Prostate gland (tissue), 2 donors: ENCODE measurements at regions of chr5 and their contacts with region 1.

Region 1: GRCh38 chr5:71782771-71783770 is 64.0 kb downstream of the CARTPT start:
- DNase-seq: peak; percentile 75
- H3K4me3 ChIP-seq: peak overlapping the region in 1 of 2 donors; percentile 13
- H3K27ac ChIP-seq: peak overlapping the region; percentile 32 to 34
- H3K4me1 ChIP-seq: no peaks in the 10 kb centered on the region
- H3K27me3 ChIP-seq: no peaks in the 10 kb centered on the region
- CTCF ChIP-seq: peak; percentile 51 to 85 (median 82)
- POLR2A ChIP-seq: no peak

Region 2: DNA sequence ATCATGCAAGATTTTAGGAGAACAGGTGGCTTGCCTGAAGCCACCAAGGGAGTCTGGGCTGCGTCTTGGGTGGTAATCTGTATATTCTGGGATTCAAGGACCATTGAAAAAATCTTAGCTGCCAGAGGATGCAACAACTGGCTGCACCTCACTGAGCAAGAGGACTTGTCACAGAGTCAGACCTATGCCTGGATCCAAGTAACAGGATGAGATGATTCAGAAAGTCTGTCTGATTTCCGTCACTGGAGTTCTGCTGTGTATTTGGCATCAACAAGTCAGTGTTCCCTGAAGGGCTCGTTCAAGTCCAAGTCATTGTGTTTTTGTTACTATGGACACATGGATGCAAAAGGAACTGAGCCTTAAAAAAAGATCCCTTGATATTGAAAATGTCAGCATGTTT is 101.8 kb before region 1 on chr5:
- intact Hi-C with region 1: no loop called
- DNase-seq: no peak
- H3K4me3 ChIP-seq: no peak overlapping the region
- H3K27ac ChIP-seq: no peak overlapping the region
- H3K4me1 ChIP-seq: no peaks in the 10 kb centered on the region
- H3K27me3 ChIP-seq: no peaks in the 10 kb centered on the region
- CTCF ChIP-seq: no peak
- POLR2A ChIP-seq: no peak

Region 3: DNA sequence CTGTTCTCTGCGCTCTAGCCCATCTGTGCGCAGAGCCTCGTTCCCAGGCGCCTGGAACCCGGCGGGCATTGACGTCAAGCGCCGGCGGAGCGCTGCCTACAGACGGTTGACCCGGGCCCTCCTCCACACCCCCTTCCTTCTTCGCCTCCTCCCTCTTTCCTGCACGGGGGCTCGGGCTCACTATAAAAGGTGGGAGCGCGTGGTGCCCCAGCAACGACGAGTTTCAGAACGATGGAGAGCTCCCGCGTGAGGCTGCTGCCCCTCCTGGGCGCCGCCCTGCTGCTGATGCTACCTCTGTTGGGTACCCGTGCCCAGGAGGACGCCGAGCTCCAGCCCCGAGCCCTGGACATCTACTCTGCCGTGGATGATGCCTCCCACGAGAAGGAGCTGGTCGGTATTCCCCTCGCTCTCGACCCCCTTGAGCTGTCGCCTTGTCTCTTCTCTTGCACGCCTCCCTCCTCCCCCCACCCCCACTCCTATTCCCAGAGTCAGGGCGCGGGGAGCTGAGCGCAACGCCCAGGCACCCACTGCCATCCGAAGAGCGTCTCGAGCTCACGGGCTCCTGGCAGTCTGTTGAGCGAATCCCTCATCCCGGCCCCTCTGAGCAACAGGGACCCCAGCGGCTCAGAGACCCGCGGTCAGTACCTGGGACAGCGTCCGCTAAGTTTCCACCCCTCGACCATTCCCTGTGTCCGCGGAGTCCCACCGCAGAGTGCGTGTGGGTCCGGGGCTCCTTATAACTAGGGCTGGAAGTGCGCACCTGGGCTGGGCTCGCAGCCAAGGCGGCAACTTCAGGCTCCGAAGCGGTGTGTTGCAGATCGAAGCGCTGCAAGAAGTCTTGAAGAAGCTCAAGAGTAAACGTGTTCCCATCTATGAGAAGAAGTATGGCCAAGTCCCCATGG is 63.8 kb before region 1 on chr5 and contains the start of gene CARTPT:
- intact Hi-C with region 1: no loop called
- DNase-seq: no peak
- H3K4me3 ChIP-seq: no peak within 1 kb of the TSS
- H3K27ac ChIP-seq: no peak within 1 kb of the TSS
- H3K4me1 ChIP-seq: peaks cover 5% of the 10 kb centered on the region
- H3K27me3 ChIP-seq: no peaks in the 10 kb centered on the region
- CTCF ChIP-seq: no peak
- POLR2A ChIP-seq: no peak
- total RNA-seq, gene CARTPT: 1.5 to 5.9 TPM

Region 4: DNA sequence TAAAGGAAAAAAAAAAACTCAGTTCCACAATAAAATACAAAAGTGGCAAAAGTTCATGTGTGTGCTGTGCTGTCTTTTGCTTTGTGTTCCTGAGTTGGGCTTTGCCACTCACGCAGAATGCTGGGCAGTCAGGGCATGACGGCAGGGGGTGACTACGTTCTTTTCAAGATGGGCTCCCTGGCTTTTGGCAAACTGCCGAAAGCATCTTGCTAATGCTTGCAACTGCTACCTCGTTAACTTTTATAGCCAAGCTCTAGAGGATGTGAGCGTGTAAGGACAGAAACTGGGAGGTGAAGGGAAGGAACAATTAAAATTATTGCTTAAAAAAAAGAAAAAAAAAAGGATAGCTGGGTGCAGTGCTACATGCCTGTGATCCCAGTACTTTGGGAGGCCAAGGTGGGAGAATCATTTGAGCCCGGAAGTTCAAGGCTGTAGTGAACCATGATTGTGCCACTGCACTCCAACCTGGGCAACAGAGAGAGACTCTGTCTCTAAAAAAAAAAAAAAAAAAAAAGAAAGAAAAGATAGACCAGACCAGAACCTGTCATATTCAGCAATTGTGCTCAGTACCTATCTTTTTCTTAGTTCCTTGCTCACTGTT is 426.5 kb after region 1 on chr5:
- intact Hi-C with region 1: loop called (anchors 10 kb)
- DNase-seq: peak; percentile 90
- H3K4me3 ChIP-seq: no peak overlapping the region
- H3K27ac ChIP-seq: peak overlapping the region in 1 of 2 donors; percentile 1
- H3K4me1 ChIP-seq: peaks cover 2% of the 10 kb centered on the region
- H3K27me3 ChIP-seq: no peaks in the 10 kb centered on the region
- CTCF ChIP-seq: peak in 3 of 4 experiments; percentile 9 to 31 (median 21)
- POLR2A ChIP-seq: no peak